ENCODE measurements at regions of chr3 and their contacts with region 1.

Region 1: GRCh38 chr3:40524568-40525285 is at the start of gene ZNF621:
- DNase-seq: peak; percentile 79
- ATAC-seq: peak; percentile 100
- H3K4me3 ChIP-seq: peak within 1 kb of the TSS; percentile 79
- H3K27ac ChIP-seq: peak within 1 kb of the TSS; percentile 84
- H3K4me1 ChIP-seq: peaks cover 3% of the 10 kb centered on the region
- H3K27me3 ChIP-seq: no peaks in the 10 kb centered on the region
- CTCF ChIP-seq: no peak
- POLR2A ChIP-seq: peak; percentile 83
- RAD21 ChIP-seq: peak; percentile 24; the same call in 1 of the 2 replicates
- total RNA-seq, gene ZNF621: 7.3 and 9.4 TPM in 2 replicates

Region 2: GRCh38 chr3:40452876-40453730 is 71.6 kb before region 1 on chr3:
- CTCF ChIA-PET with region 1: no interaction called
- POLR2A ChIA-PET with region 1: no interaction called
- dilution Hi-C with region 1: no loop called
- in situ Hi-C with region 1: no loop called
- intact Hi-C with region 1: loop called (anchors 2 kb)
- DNase-seq: peak; percentile 98
- ATAC-seq: peak; percentile 95
- H3K4me3 ChIP-seq: peak overlapping the region; percentile 72
- H3K27ac ChIP-seq: peak overlapping the region; percentile 81
- H3K4me1 ChIP-seq: no peaks in the 10 kb centered on the region
- H3K27me3 ChIP-seq: no peaks in the 10 kb centered on the region
- CTCF ChIP-seq: no peak
- POLR2A ChIP-seq: peak; percentile 59
- RAD21 ChIP-seq: no peak

Region 3: DNA sequence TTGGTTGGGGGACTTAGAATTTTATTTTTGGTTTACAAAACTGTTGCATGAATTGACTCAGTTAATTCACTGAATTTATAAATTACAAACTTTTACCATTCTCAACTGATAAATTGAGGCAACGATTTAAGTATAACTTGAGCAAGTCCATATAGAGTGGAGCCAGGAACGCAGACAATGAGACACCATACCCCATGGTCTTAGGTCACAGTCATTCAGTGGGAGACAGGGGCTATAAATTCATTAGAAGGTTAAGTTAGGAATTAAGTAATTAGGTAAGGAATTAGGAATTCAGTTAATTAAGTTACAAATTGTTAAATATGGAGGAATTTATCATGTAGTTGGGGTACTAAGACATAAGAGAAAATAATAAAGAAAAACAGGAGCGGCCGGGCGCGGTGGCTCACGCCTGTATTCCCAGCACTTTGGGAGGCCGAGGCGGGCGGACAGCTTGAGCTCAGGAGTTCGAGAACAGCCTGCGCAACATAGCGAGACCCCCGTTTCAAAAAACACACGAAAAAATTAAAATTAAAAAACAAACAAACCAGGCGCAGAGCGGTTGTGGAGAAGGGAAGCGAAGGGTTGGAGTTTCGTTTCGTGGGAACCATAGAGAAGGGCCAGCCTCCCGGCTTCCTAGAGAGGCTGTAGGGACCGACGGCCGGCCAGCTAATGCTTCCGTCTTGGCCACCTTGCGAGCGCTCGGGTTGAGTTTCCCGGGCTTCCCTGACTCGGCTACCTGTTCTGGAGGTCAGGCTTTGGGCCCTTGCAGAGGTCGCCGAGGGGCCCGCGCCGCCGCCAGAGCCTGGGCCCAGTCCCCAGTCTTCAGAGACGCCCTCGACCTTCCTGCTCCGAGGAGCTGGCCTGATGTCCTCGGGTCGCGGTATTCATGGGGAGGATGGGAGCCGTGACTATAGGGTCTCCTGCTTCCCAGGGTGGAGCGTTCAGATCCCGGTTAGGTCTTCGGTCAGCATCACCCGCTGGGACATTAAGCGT is 48.0 kb before region 1 on chr3 and contains the start of gene ZNF619:
- CTCF ChIA-PET with region 1: no interaction called
- POLR2A ChIA-PET with region 1: no interaction called
- dilution Hi-C with region 1: no loop called
- in situ Hi-C with region 1: no loop called
- intact Hi-C with region 1: loop called (anchors 1 kb)
- DNase-seq: peak; percentile 73
- ATAC-seq: peak; percentile 99
- H3K4me3 ChIP-seq: peak within 1 kb of the TSS; percentile 70
- H3K27ac ChIP-seq: peak within 1 kb of the TSS; percentile 41
- H3K4me1 ChIP-seq: peaks cover 3% of the 10 kb centered on the region
- H3K27me3 ChIP-seq: no peaks in the 10 kb centered on the region
- CTCF ChIP-seq: no peak
- POLR2A ChIP-seq: 0 out of 2 replicates have a peak, but pooled peaks have one; percentile 27
- RAD21 ChIP-seq: no peak
- total RNA-seq, gene ZNF619: 4.2 and 4.8 TPM in 2 replicates

Measured in IMR-90 (cell line).